K562 (cell line): ENCODE measurements at regions of chr11 and their contacts with region 1.

Region 1: DNA sequence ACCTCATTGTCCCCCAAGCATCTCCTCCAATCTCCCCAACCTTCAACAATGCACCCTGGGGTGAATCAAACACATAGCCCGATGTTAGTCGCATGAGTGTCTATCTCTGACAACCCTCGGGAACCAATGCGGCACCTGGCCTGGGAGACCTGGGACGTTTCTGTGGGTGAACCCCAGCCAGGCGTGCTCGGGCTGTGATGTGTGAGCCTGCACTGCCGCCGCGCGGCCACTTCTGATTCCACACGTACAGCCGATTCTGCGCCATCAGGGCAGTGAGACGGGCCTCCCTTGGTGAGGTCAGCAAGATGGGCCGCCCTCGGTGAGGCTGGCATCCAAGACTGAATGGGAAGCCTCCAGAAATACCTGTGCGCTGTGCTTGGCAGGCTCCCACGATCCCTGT is 5.2 kb upstream of the H19 start:
- DNase-seq: no peak
- ATAC-seq: peak; percentile 78
- H3K4me3 ChIP-seq: no peak overlapping the region
- H3K27ac ChIP-seq: no peak overlapping the region
- H3K4me1 ChIP-seq: no peaks in the 10 kb centered on the region
- H3K27me3 ChIP-seq: no peaks in the 10 kb centered on the region
- CTCF ChIP-seq: no peak
- EP300 ChIP-seq: no peak
- POLR2A ChIP-seq: no peak
- RAD21 ChIP-seq: no peak

Region 2: DNA sequence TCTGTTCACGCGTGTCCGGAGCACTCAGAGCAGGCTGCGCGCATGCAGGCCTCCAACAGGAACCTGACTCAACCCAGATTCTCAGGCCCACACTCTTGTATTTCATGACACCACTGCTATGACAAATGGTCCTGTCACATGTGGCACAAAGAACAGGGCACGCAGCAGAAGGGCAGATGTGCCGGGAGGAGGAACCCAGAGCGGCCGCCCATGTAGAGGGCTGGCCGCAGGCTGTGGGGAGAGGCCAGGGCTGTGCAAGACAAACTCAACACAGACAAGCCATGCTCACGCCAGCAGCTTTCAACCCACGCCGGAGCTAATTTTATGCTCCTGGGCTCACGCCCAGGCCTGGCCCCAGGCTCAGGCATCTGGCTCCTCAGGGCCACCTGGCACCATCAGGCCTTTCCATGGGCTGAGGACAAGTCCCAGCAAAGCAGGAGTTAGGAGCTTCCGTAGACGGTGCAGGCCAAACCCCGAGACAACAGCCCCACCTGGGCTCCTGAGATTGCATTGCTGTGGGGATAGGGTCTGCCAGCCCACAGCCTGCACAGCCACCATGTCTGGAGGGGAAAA is 470.7 kb before region 1 on chr11:
- CTCF ChIA-PET with region 1: no interaction called
- POLR2A ChIA-PET with region 1: no interaction called
- in situ Hi-C with region 1: no loop called
- intact Hi-C with region 1: no loop called
- DNase-seq: no peak
- ATAC-seq: no peak
- H3K4me3 ChIP-seq: no peak overlapping the region
- H3K27ac ChIP-seq: no peak overlapping the region
- H3K4me1 ChIP-seq: peaks cover 0 to 40% of the 10 kb centered on the region in 2 experiments; a peak in 3 of 5 replicates
- H3K27me3 ChIP-seq: no peaks in the 10 kb centered on the region
- CTCF ChIP-seq: no peak
- EP300 ChIP-seq: no peak
- POLR2A ChIP-seq: no peak
- RAD21 ChIP-seq: no peak

Region 3: GRCh38 chr11:1694064-1694845 is 308.6 kb before region 1 on chr11:
- CTCF ChIA-PET with region 1: interaction called, 25 read pairs
- POLR2A ChIA-PET with region 1: no interaction called
- in situ Hi-C with region 1: loop called (anchors 25 kb)
- intact Hi-C with region 1: no loop called
- DNase-seq: peak; percentile 87 to 95 (median 92)
- ATAC-seq: peak; percentile 99
- H3K4me3 ChIP-seq: no peak overlapping the region
- H3K27ac ChIP-seq: no peak overlapping the region
- H3K4me1 ChIP-seq: peaks cover 0 to 16% of the 10 kb centered on the region in 2 experiments; a peak in 2 of 5 replicates
- H3K27me3 ChIP-seq: peaks cover 7 to 63% of the 10 kb centered on the region in 2 experiments; a peak in 3 of 5 replicates
- CTCF ChIP-seq: peak; percentile 83 to 97 (median 91)
- EP300 ChIP-seq: no peak
- POLR2A ChIP-seq: no peak
- RAD21 ChIP-seq: peak; percentile 94 to 97

Region 4: DNA sequence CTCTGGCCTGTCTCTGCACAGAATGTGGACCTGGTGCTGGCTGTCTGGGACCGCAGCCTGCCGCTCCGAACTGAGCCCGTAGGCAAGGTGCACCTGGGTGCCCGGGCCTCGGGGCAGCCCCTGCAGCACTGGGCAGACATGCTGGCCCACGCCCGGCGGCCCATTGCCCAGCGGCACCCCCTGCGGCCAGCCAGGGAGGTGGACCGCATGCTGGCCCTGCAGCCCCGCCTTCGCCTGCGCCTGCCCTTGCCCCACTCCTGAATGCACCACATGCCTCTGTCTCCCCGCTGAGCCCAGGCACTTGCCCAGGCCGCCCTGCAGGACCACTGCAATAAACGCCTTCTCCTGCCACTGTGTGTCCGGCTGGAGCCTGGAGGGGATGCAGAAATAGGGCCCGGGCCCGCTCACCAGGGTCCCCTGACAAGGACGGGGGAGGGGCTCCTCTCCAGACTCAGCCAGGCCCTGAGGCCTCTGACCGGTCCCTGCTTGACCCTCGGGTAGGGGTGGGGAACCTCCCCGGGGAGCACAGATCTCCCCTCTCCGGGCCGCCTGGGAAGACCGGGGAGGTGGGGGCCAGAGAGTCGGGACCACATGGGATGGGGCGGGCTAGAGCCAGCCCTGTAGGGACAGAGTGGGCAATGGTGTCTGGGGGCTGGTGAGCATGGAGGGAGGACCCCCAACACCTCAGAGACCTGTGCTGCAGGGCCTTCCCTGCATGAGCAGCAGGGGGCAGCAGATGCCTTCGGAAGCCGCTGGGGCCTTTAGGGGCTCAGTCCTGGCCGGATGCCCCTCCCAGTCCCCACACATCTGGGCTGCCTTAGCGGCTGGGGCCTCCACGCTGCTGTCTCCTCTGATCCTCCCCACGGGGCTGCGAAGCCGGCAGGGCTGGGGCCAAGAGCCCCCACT is 165.4 kb before region 1 on chr11:
- CTCF ChIA-PET with region 1: interaction called, 54 read pairs
- POLR2A ChIA-PET with region 1: no interaction called
- in situ Hi-C with region 1: no loop called
- intact Hi-C with region 1: no loop called
- DNase-seq: peak; percentile 74 to 88 (median 86)
- ATAC-seq: peak; percentile 88
- H3K4me3 ChIP-seq: no peak overlapping the region
- H3K27ac ChIP-seq: no peak overlapping the region
- H3K4me1 ChIP-seq: peaks cover 0 to 53% of the 10 kb centered on the region in 2 experiments; a peak in 4 of 5 replicates
- H3K27me3 ChIP-seq: peaks cover 3 to 63% of the 10 kb centered on the region in 2 experiments; a peak in 3 of 5 replicates
- CTCF ChIP-seq: peak; percentile 75 to 90 (median 81)
- EP300 ChIP-seq: no peak
- POLR2A ChIP-seq: no peak
- RAD21 ChIP-seq: peak; percentile 71 to 94

Region 5: GRCh38 chr11:1882519-1883238 is 120.1 kb before region 1 on chr11:
- CTCF ChIA-PET with region 1: interaction called, 93 read pairs
- POLR2A ChIA-PET with region 1: interaction called, 3 read pairs
- in situ Hi-C with region 1: loop called (anchors 10 kb)
- intact Hi-C with region 1: no loop called
- DNase-seq: peak; percentile 86 to 91 (median 90)
- ATAC-seq: peak; percentile 98
- H3K4me3 ChIP-seq: no peak overlapping the region
- H3K27ac ChIP-seq: no peak overlapping the region
- H3K4me1 ChIP-seq: peaks cover 0 to 27% of the 10 kb centered on the region in 2 experiments; a peak in 2 of 5 replicates
- H3K27me3 ChIP-seq: peaks cover 3 to 47% of the 10 kb centered on the region in 2 experiments; a peak in 4 of 5 replicates
- CTCF ChIP-seq: peak; percentile 81 to 93 (median 93)
- EP300 ChIP-seq: no peak
- POLR2A ChIP-seq: no peak
- RAD21 ChIP-seq: peak; percentile 79 to 93

Region 6: DNA sequence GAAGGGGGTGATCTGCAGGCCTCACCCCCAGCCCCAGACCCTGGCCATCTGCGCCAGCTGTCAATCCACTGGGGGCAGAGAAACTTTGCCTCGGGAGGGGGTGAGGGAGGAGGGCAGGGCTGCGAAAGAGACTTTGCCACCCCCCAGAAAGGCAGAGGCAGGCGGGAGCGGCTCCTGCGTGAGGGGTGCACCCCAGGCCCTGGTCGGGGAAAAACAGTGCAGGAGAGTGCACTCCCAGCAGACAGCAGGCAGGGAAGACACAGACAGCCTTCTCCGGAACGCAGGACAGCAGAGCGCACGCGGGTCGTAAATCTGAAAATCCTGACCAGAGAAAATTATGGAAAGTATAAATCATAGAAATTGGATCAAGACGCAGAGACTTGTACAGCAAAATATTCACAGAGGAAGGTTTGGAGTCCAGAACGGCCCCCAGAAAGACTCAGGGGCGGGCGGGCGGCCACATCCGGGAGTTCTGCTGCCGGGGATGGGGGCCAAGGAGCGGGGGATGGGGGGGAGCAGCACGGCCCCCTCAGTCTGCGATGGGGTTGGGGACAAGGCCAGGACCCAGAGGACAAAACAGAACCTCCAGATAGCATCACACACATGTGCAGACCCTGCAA is 63.7 kb before region 1 on chr11:
- CTCF ChIA-PET with region 1: no interaction called
- POLR2A ChIA-PET with region 1: no interaction called
- in situ Hi-C with region 1: no loop called
- intact Hi-C with region 1: no loop called
- DNase-seq: peak in 1 of 4 experiments; percentile 39
- ATAC-seq: 0 out of 3 replicates have a peak, but pooled peaks have one; percentile 17
- H3K4me3 ChIP-seq: no peak overlapping the region
- H3K27ac ChIP-seq: no peak overlapping the region
- H3K4me1 ChIP-seq: peaks cover 0 to 54% of the 10 kb centered on the region in 2 experiments; a peak in 3 of 5 replicates
- H3K27me3 ChIP-seq: peaks cover 15 to 49% of the 10 kb centered on the region in 2 experiments; a peak in 4 of 5 replicates
- CTCF ChIP-seq: no peak
- EP300 ChIP-seq: no peak
- POLR2A ChIP-seq: no peak
- RAD21 ChIP-seq: no peak

Region 7: GRCh38 chr11:1953489-1954266 is 49.1 kb before region 1 on chr11:
- CTCF ChIA-PET with region 1: interaction called, 53 read pairs
- POLR2A ChIA-PET with region 1: interaction called, 3 read pairs
- in situ Hi-C with region 1: no loop called
- intact Hi-C with region 1: no loop called
- DNase-seq: no peak
- ATAC-seq: peak; percentile 89
- H3K4me3 ChIP-seq: no peak overlapping the region
- H3K27ac ChIP-seq: no peak overlapping the region
- H3K4me1 ChIP-seq: no peaks in the 10 kb centered on the region
- H3K27me3 ChIP-seq: no peaks in the 10 kb centered on the region
- CTCF ChIP-seq: no peak
- EP300 ChIP-seq: no peak
- POLR2A ChIP-seq: no peak
- RAD21 ChIP-seq: no peak